ENCODE measurements at regions of chr11 and their contacts with region 1.

Region 1: GRCh38 chr11:102346748-102347461 is at the start of gene BIRC2:
- DNase-seq: peak; percentile 78
- ATAC-seq: peak; percentile 89
- H3K4me3 ChIP-seq: peak within 1 kb of the TSS; percentile 82 to 94
- H3K27ac ChIP-seq: peak within 1 kb of the TSS; percentile 100
- H3K4me1 ChIP-seq: peaks cover 50% of the 10 kb centered on the region
- H3K27me3 ChIP-seq: no peaks in the 10 kb centered on the region
- CTCF ChIP-seq: peak; percentile 99
- total RNA-seq, gene BIRC2: 76.8 TPM

Region 2: DNA sequence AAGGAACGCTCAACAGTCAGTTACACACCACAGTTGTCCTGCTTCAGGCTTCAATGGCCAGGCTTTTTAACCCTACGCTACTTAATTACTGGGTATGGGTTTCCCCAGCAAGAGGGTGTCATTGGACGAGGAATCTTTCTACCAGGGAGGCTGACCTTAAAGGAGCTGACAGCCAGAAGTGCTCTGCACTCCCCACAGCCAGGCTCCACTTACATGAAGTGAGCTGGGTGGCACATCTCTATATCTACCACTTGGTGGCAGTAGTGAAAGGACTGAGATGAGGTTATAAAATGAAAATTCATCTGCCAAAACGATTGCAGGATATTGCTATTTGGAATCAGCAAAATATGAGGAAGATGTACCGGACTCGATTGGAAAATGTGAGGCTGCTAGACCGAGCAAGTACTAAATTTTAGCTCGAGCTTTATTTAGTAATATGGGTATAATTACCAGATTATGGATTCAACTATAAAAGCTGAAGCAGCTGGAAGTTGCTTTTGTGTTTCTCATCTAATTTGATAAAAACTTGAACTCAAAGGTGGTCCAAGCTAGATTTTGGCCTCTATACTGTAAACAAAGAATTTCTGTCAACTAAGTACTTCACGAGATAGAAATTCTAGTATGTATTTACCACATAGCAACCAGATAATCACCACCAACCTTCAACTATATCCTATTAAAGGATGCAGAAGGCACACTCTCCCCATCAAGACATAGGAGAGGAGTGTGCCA is 486.0 kb before region 1 on chr11:
- CTCF ChIA-PET with region 1: interaction called, 12 read pairs
- POLR2A ChIA-PET with region 1: no interaction called
- in situ Hi-C with region 1: no loop called
- intact Hi-C with region 1: no loop called
- DNase-seq: peak; percentile 45
- ATAC-seq: peak; percentile 92
- H3K4me3 ChIP-seq: no peak overlapping the region
- H3K27ac ChIP-seq: peak overlapping the region; percentile 40; the same call in 1 of the 2 replicates
- H3K4me1 ChIP-seq: peaks cover 13% of the 10 kb centered on the region; the same call in 1 of the 2 replicates
- H3K27me3 ChIP-seq: no peaks in the 10 kb centered on the region
- CTCF ChIP-seq: peak; percentile 92

Region 3: GRCh38 chr11:102168481-102168880 is 178.4 kb before region 1 on chr11:
- CTCF ChIA-PET with region 1: no interaction called
- POLR2A ChIA-PET with region 1: no interaction called
- in situ Hi-C with region 1: no loop called
- intact Hi-C with region 1: no loop called
- DNase-seq: no peak
- ATAC-seq: peak; percentile 65; the same call in 1 of the 2 replicates
- H3K4me3 ChIP-seq: no peak overlapping the region
- H3K27ac ChIP-seq: no peak overlapping the region
- H3K4me1 ChIP-seq: peaks cover 2% of the 10 kb centered on the region; the same call in 1 of the 2 replicates
- H3K27me3 ChIP-seq: no peaks in the 10 kb centered on the region
- CTCF ChIP-seq: no peak

Measured in Panc1 (cell line).